Calu3 (cell line): ENCODE measurements at regions of chr15 and their contacts with region 1.

Region 1: GRCh38 chr15:73560501-73561117 is 72.6 kb downstream of the NPTN start:
- DNase-seq: peak; percentile 26
- H3K4me3 Mint-ChIP-seq: no peak overlapping the region
- H3K27ac Mint-ChIP-seq: no peak overlapping the region
- H3K4me1 Mint-ChIP-seq: peaks cover 18% of the 10 kb centered on the region
- H3K27me3 Mint-ChIP-seq: no peaks in the 10 kb centered on the region
- CTCF ChIP-seq: no peak

Region 2: GRCh38 chr15:73571346-73571745 is 10.7 kb after region 1 on chr15:
- CTCF ChIA-PET with region 1: interaction called, 12 read pairs
- intact Hi-C with region 1: no loop called
- DNase-seq: no peak
- H3K4me3 Mint-ChIP-seq: no peak overlapping the region
- H3K27ac Mint-ChIP-seq: no peak overlapping the region
- H3K4me1 Mint-ChIP-seq: no peaks in the 10 kb centered on the region
- H3K27me3 Mint-ChIP-seq: no peaks in the 10 kb centered on the region
- CTCF ChIP-seq: no peak

Region 3: GRCh38 chr15:73647259-73648014 is 86.8 kb after region 1 on chr15:
- CTCF ChIA-PET with region 1: interaction called, 10 read pairs
- intact Hi-C with region 1: no loop called
- DNase-seq: peak; percentile 44
- H3K4me3 Mint-ChIP-seq: no peak overlapping the region
- H3K27ac Mint-ChIP-seq: no peak overlapping the region
- H3K4me1 Mint-ChIP-seq: peaks cover 15% of the 10 kb centered on the region
- H3K27me3 Mint-ChIP-seq: no peaks in the 10 kb centered on the region
- CTCF ChIP-seq: no peak

Region 4: GRCh38 chr15:73697033-73697467 is 136.4 kb after region 1 on chr15:
- CTCF ChIA-PET with region 1: interaction called, 9 read pairs
- intact Hi-C with region 1: loop called (anchors 1 kb)
- DNase-seq: no peak
- H3K4me3 Mint-ChIP-seq: no peak overlapping the region
- H3K27ac Mint-ChIP-seq: no peak overlapping the region
- H3K4me1 Mint-ChIP-seq: peaks cover 10% of the 10 kb centered on the region
- H3K27me3 Mint-ChIP-seq: no peaks in the 10 kb centered on the region
- CTCF ChIP-seq: no peak